Activated CD4-positive, alpha-beta memory T cell treated with anti-CD3 and anti-CD28 coated beads for 36 hours (primary cell): ENCODE measurements at regions of chr16 and their contacts with region 1.

Region 1: DNA sequence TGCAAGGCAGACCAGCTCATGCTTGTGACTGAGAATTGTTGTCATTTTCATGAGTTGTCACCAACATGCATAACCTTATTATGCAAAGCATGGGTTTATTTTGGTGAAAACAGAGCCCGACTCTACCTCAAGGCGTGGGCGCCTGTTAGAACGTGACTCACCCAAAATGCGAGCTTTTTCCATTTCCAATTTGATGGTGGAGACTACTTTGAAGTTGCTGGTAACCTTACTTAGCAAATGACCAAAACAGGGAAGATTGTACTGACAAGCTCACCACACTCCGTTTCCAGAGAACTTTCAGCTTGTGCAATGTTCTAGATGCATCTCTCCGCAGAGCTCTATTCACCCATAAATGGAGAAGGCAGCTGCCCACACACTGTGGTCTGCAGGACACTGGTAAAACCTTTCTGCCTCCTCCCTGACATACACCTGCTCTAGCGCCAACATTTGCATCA is 284.5 kb downstream of the MAF start:
- DNase-seq: peak; percentile 92
- H3K4me3 Mint-ChIP-seq: peak overlapping the region; percentile 28
- H3K27ac Mint-ChIP-seq: peak overlapping the region; percentile 91
- H3K4me1 Mint-ChIP-seq: peaks cover 37% of the 10 kb centered on the region
- H3K27me3 Mint-ChIP-seq: peaks cover 4% of the 10 kb centered on the region

Region 2: GRCh38 chr16:78742501-78743283 is 573.3 kb before region 1 on chr16:
- CTCF ChIA-PET with region 1: no interaction called
- POLR2A ChIA-PET with region 1: no interaction called
- intact Hi-C with region 1: loop called (anchors 1 kb)
- DNase-seq: peak; percentile 94
- H3K4me3 Mint-ChIP-seq: peak overlapping the region; percentile 73
- H3K27ac Mint-ChIP-seq: peak overlapping the region; percentile 95
- H3K4me1 Mint-ChIP-seq: peaks cover 40% of the 10 kb centered on the region
- H3K27me3 Mint-ChIP-seq: no peaks in the 10 kb centered on the region

Region 3: GRCh38 chr16:78900044-78900811 is 415.8 kb before region 1 on chr16:
- CTCF ChIA-PET with region 1: interaction called, 3 read pairs
- POLR2A ChIA-PET with region 1: interaction called, 5 read pairs
- intact Hi-C with region 1: loop called (anchors 1 kb)
- DNase-seq: no peak
- H3K4me3 Mint-ChIP-seq: peak overlapping the region; percentile 20
- H3K27ac Mint-ChIP-seq: peak overlapping the region; percentile 96
- H3K4me1 Mint-ChIP-seq: peaks cover 76% of the 10 kb centered on the region
- H3K27me3 Mint-ChIP-seq: no peaks in the 10 kb centered on the region

Region 4: GRCh38 chr16:79089735-79090284 is 226.2 kb before region 1 on chr16:
- CTCF ChIA-PET with region 1: no interaction called
- POLR2A ChIA-PET with region 1: interaction called, 3 read pairs
- intact Hi-C with region 1: loop called (anchors 1 kb)
- DNase-seq: peak; percentile 85
- H3K4me3 Mint-ChIP-seq: peak overlapping the region; percentile 45
- H3K27ac Mint-ChIP-seq: peak overlapping the region; percentile 86
- H3K4me1 Mint-ChIP-seq: peaks cover 59% of the 10 kb centered on the region
- H3K27me3 Mint-ChIP-seq: no peaks in the 10 kb centered on the region

Region 5: DNA sequence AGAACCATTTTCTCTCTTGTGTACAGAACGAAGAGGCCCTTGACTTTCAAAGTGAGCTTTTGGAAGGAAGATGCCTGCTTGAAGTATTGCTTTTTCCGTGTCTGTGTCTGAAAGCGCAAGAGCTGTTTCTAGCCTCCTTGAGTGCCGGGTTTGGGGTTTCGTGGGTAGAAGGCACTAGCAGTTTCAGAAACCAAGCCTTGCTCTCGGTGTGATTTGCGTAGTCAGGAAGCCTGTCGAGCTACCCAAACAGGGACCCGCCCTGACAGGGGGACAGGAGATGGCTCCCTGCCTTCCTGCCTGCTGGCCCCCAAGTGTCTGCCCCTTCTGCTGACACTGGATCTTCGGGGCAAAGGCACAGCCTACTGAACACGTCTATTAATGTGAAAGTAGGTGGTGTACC is 37.5 kb before region 1 on chr16:
- CTCF ChIA-PET with region 1: interaction called, 5 read pairs
- POLR2A ChIA-PET with region 1: interaction called, 49 read pairs
- intact Hi-C with region 1: loop called (anchors 1 kb)
- DNase-seq: peak; percentile 83
- H3K4me3 Mint-ChIP-seq: peak overlapping the region; percentile 54
- H3K27ac Mint-ChIP-seq: peak overlapping the region; percentile 83
- H3K4me1 Mint-ChIP-seq: peaks cover 84% of the 10 kb centered on the region
- H3K27me3 Mint-ChIP-seq: peaks cover 2% of the 10 kb centered on the region

Region 6: GRCh38 chr16:79412783-79413225 is 96.8 kb after region 1 on chr16:
- CTCF ChIA-PET with region 1: no interaction called
- POLR2A ChIA-PET with region 1: interaction called, 5 read pairs
- intact Hi-C with region 1: loop called (anchors 2 kb)
- DNase-seq: no peak
- H3K4me3 Mint-ChIP-seq: no peak overlapping the region
- H3K27ac Mint-ChIP-seq: peak overlapping the region; percentile 3
- H3K4me1 Mint-ChIP-seq: peaks cover 41% of the 10 kb centered on the region
- H3K27me3 Mint-ChIP-seq: no peaks in the 10 kb centered on the region